Activated CD4-positive, alpha-beta T cell treated with anti-CD3 and anti-CD28 coated beads for 36 hours (primary cell): ENCODE measurements at regions of chr4 and their contacts with region 1.

Region 1: DNA sequence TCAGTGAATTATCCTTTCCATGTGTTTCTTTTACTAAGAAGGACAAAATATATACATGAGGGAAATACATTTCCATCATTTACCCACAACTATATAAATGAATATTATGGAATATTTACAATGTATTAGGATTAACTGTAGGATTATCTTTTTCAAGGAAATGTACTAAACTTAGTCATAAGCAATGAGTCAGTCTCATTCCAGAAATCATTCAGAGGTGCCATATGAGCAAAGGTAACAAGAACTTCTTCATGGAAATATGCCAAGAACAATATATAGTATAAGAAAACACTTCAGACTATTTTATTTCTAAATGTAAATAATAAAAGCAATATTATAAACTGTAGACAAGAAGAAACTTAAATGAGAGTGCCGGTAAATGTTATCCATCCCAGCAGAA is 67.1 kb downstream of the USP38 start:
- DNase-seq: no peak
- ATAC-seq: no peak
- H3K4me3 Mint-ChIP-seq: no peak overlapping the region
- H3K27ac Mint-ChIP-seq: no peak overlapping the region
- H3K4me1 Mint-ChIP-seq: peaks cover 2% of the 10 kb centered on the region
- H3K27me3 Mint-ChIP-seq: peaks cover 2% of the 10 kb centered on the region

Region 2: DNA sequence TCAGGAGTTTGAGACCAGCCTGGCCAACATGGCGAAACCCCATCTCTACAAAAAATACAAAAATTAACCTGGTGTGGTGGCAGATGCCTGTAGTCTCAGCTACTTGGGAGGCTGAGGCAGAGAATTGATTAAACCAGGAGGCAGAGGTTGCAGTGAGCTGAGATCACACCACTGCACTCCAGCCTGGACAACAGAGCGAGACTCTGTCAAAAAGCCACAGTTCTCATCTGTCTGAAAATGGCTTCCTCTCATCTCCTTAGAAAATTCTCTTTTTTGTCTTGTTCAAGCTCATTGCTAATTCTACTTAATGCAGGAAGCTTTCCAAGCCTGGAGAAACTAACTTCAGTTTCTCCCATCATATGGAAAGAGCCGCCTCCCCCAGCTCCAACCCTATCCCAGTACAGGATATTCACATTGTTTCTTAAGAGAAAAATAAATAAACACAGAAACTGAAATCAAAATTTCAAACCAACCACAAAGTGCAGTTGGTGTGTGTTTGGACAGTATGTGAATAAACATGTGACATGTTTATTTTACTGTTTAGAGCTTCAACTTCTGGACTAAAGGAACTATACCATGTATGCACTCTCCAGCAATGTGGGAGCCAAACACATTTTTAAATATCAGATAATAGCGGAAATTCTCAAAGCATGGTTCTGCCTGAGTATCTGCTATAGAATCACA is 29.9 kb after region 1 on chr4:
- CTCF ChIA-PET with region 1: no interaction called
- POLR2A ChIA-PET with region 1: no interaction called
- intact Hi-C with region 1: loop called in 1 of 2 experiments (anchors 1 kb)
- DNase-seq: no peak
- ATAC-seq: no peak
- H3K4me3 Mint-ChIP-seq: no peak overlapping the region
- H3K27ac Mint-ChIP-seq: no peak overlapping the region
- H3K4me1 Mint-ChIP-seq: no peaks in the 10 kb centered on the region
- H3K27me3 Mint-ChIP-seq: peaks cover 2% of the 10 kb centered on the region

Region 3: GRCh38 chr4:143743591-143743990 is 491.8 kb after region 1 on chr4:
- CTCF ChIA-PET with region 1: no interaction called
- POLR2A ChIA-PET with region 1: no interaction called
- intact Hi-C with region 1: no loop called
- DNase-seq: no peak
- ATAC-seq: no peak
- H3K4me3 Mint-ChIP-seq: no peak overlapping the region
- H3K27ac Mint-ChIP-seq: no peak overlapping the region
- H3K4me1 Mint-ChIP-seq: no peaks in the 10 kb centered on the region
- H3K27me3 Mint-ChIP-seq: no peaks in the 10 kb centered on the region